Activated CD4-positive, alpha-beta T cell treated with anti-CD3 and anti-CD28 coated beads, Interleukin-2, amount 10 ng/mL, durations not matched to agents 7 days and 5 days (primary cell): ENCODE measurements at regions of chr17 and their contacts with region 1.

Region 1: DNA sequence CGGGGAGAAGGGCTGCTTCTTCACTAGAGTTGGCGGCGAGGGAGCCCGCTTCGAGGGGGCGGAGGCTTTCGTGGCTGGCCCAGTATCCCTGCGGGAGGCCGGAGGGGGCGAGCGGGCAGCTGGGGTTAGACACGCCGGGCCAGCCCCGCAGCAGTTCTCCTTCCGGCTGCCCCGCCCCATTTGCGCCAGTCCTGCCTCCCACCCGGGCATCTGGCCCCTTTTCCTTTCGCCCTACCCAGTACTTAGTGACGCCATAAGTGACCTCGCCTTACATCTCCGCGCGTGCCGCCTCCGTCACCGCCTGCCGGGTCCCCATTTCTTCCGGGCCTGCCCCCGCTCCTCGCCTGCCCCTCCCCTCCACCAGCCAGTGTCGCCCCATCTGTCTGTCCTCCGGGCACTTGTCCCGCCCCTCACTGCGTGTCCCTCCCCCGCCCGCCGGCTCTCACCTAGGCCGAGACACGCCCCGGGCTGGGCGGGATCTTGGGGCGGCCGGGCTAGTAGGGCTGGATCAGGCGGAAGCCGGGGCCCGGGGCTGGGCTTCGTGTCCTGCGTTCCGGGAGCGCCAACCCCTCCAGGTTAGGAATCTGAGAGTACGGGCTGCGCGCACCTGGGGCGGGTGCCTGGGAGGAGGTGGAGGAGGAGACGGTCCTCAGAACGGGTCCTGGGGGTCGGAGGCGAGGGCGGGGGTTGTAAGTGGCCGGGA is 14.3 kb downstream of the SPATA32 start:
- DNase-seq: peak; percentile 97
- H3K4me3 Mint-ChIP-seq: peak overlapping the region; percentile 83
- H3K27ac Mint-ChIP-seq: peak overlapping the region; percentile 92
- H3K4me1 Mint-ChIP-seq: peaks cover 71% of the 10 kb centered on the region
- H3K27me3 Mint-ChIP-seq: no peaks in the 10 kb centered on the region

Region 2: GRCh38 chr17:45123930-45124796 is 123.4 kb before region 1 on chr17:
- CTCF ChIA-PET with region 1: no interaction called
- POLR2A ChIA-PET with region 1: no interaction called
- DNase-seq: no peak
- H3K4me3 Mint-ChIP-seq: no peak overlapping the region
- H3K27ac Mint-ChIP-seq: no peak overlapping the region
- H3K4me1 Mint-ChIP-seq: no peaks in the 10 kb centered on the region
- H3K27me3 Mint-ChIP-seq: peaks cover 7% of the 10 kb centered on the region

Region 3: GRCh38 chr17:45235416-45236281 is 11.9 kb before region 1 on chr17:
- CTCF ChIA-PET with region 1: interaction called, 39 read pairs
- POLR2A ChIA-PET with region 1: no interaction called
- DNase-seq: peak; percentile 84
- H3K4me3 Mint-ChIP-seq: no peak overlapping the region
- H3K27ac Mint-ChIP-seq: peak overlapping the region; percentile 83
- H3K4me1 Mint-ChIP-seq: peaks cover 62% of the 10 kb centered on the region
- H3K27me3 Mint-ChIP-seq: no peaks in the 10 kb centered on the region